Esophagus squamous epithelium (tissue), 5 donors: ENCODE measurements at regions of chr14 and their contacts with region 1.

Region 1: DNA sequence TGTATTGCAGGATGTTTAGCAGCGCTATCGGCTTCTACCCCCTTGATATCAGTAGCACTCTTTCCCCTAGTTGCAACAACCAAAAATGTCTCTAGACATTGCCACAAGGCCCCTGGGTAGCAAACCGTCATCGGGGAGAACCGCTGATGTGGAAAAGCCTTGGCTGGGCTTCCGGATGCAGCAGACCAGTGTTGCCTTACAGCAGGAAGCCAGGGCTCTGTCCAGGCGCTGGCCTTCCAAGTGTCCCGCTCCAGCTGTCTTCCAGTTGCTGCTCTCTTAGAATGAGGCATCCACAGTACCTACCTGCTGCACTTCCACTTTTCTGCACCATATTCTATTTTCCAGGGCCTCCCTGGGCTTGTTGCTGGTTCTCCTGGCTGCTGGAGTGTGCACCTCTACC is 22.6 kb upstream of the SLC10A1 start:
- DNase-seq: no peak
- H3K4me3 ChIP-seq: no peak overlapping the region
- H3K27ac ChIP-seq: no peak overlapping the region
- H3K4me1 ChIP-seq: peaks cover 0 to 6% (median 0%) of the 10 kb centered on the region in 3 donors
- H3K27me3 ChIP-seq: peaks cover 0 to 43% (median 0%) of the 10 kb centered on the region in 4 donors
- CTCF ChIP-seq: no peak
- POLR2A ChIP-seq: no peak

Region 2: GRCh38 chr14:70027785-70028428 is 208.3 kb after region 1 on chr14:
- intact Hi-C with region 1: loop called (anchors 5 kb)
- DNase-seq: no peak
- H3K4me3 ChIP-seq: no peak overlapping the region
- H3K27ac ChIP-seq: no peak overlapping the region
- H3K4me1 ChIP-seq: no peaks in the 10 kb centered on the region
- H3K27me3 ChIP-seq: peaks cover 0 to 26% (median 0%) of the 10 kb centered on the region in 4 donors
- CTCF ChIP-seq: peak; percentile 74 to 89 (median 80)
- POLR2A ChIP-seq: no peak